B cell (primary cell): ENCODE measurements at regions of chr5 and their contacts with region 1.

Region 1: DNA sequence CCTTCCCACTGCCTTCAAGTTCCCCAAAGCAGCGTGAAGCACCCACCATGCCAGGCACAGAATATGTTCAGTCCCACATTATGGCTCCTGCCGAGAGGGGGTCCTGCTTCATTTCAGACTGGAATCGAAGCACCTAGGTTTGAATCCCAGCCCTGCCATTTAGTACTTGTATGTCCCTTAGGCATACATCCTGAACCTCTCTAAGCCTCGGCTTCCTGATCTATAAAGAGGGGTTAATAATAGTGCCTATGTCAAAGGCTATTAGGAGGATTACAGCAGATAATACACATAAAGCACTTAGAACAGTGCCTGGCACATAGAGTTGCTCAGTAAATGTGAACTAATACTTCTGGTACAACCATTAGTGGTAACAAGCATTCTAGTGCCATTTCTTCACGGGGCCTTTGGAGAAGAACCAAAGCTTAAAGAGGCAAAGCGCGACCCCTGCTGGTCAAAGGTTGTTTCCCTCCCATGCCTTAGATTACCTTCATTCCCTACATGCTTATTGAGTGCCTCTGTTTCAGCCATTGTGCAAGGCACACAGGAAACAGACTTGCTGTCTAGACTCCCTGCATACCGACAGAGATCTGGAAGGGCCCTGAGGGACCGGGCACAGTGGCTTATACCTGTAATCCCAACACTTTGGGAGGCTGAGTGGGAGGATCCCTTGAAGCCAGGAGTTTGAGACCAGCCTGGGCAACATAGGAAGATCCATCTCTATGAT is 98.2 kb downstream of the PPARGC1B start:
- DNase-seq: peak; percentile 85
- ATAC-seq: peak; percentile 59
- H3K4me3 ChIP-seq: no peak overlapping the region
- H3K4me3 Mint-ChIP-seq: no peak overlapping the region
- H3K27ac ChIP-seq: no peak overlapping the region
- H3K27ac Mint-ChIP-seq: no peak overlapping the region
- H3K4me1 ChIP-seq: no peaks in the 10 kb centered on the region
- H3K4me1 Mint-ChIP-seq: peaks cover 6% of the 10 kb centered on the region
- H3K27me3 ChIP-seq: no peaks in the 10 kb centered on the region
- H3K27me3 Mint-ChIP-seq: no peaks in the 10 kb centered on the region
- CTCF ChIP-seq: peak; percentile 92

Region 2: GRCh38 chr5:149636851-149637246 is 191.5 kb before region 1 on chr5:
- CTCF ChIA-PET with region 1: interaction called, 389 read pairs
- POLR2A ChIA-PET with region 1: interaction called, 3 read pairs
- intact Hi-C with region 1: no loop called
- DNase-seq: peak; percentile 75
- ATAC-seq: peak; percentile 57
- H3K4me3 ChIP-seq: no peak overlapping the region
- H3K4me3 Mint-ChIP-seq: no peak overlapping the region
- H3K27ac ChIP-seq: no peak overlapping the region
- H3K27ac Mint-ChIP-seq: no peak overlapping the region
- H3K4me1 ChIP-seq: no peaks in the 10 kb centered on the region
- H3K4me1 Mint-ChIP-seq: peaks cover 6% of the 10 kb centered on the region
- H3K27me3 ChIP-seq: no peaks in the 10 kb centered on the region
- H3K27me3 Mint-ChIP-seq: no peaks in the 10 kb centered on the region
- CTCF ChIP-seq: peak; percentile 94

Region 3: DNA sequence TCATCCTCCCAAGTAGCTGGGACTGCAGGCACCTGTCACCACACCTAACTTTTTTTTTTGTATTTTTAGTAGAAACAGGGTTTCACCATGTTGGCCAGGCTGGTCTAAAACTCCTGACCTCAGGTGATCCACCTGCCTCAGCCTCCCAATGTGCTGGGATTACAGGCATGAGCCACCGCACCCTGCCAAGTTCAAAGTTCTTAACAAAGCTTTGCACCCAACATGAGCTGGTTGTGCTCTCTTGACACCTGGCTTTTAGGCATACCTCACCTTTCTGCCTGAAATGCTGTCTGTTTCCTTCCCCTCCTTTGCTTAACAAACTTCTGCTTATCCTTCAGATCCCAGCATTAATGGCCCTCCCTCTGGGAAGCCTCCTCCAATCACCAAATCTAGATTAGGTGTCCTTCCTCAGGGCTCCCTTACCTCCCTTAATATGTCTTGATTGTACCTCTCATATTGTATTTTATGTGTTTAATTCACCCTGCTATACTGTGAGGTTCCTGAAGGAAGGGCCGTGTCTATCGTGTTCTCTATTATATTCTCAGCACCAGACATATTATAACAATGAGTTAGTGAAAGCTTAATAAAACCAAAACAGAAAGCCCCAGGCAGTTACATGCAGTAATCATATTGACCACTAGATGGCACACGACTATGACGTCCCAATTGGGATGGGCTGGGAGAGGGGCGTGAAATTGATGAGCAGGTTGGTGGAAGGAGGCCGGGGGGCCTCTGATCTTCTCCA is 161.1 kb before region 1 on chr5:
- CTCF ChIA-PET with region 1: interaction called, 204 read pairs
- POLR2A ChIA-PET with region 1: no interaction called
- intact Hi-C with region 1: loop called (anchors 1 kb)
- DNase-seq: peak; percentile 72
- ATAC-seq: peak; percentile 45
- H3K4me3 ChIP-seq: no peak overlapping the region
- H3K4me3 Mint-ChIP-seq: no peak overlapping the region
- H3K27ac ChIP-seq: no peak overlapping the region
- H3K27ac Mint-ChIP-seq: no peak overlapping the region
- H3K4me1 ChIP-seq: peaks cover 0 to 4% of the 10 kb centered on the region in 2 donors
- H3K4me1 Mint-ChIP-seq: peaks cover 3% of the 10 kb centered on the region
- H3K27me3 ChIP-seq: no peaks in the 10 kb centered on the region
- H3K27me3 Mint-ChIP-seq: no peaks in the 10 kb centered on the region
- CTCF ChIP-seq: peak; percentile 87

Region 4: GRCh38 chr5:149816661-149817060 is 11.7 kb before region 1 on chr5:
- CTCF ChIA-PET with region 1: interaction called, 12 read pairs
- POLR2A ChIA-PET with region 1: no interaction called
- intact Hi-C with region 1: no loop called
- DNase-seq: no peak
- ATAC-seq: no peak
- H3K4me3 ChIP-seq: no peak overlapping the region
- H3K4me3 Mint-ChIP-seq: no peak overlapping the region
- H3K27ac ChIP-seq: no peak overlapping the region
- H3K27ac Mint-ChIP-seq: no peak overlapping the region
- H3K4me1 ChIP-seq: no peaks in the 10 kb centered on the region
- H3K4me1 Mint-ChIP-seq: peaks cover 3% of the 10 kb centered on the region
- H3K27me3 ChIP-seq: no peaks in the 10 kb centered on the region
- H3K27me3 Mint-ChIP-seq: no peaks in the 10 kb centered on the region
- CTCF ChIP-seq: no peak

Region 5: DNA sequence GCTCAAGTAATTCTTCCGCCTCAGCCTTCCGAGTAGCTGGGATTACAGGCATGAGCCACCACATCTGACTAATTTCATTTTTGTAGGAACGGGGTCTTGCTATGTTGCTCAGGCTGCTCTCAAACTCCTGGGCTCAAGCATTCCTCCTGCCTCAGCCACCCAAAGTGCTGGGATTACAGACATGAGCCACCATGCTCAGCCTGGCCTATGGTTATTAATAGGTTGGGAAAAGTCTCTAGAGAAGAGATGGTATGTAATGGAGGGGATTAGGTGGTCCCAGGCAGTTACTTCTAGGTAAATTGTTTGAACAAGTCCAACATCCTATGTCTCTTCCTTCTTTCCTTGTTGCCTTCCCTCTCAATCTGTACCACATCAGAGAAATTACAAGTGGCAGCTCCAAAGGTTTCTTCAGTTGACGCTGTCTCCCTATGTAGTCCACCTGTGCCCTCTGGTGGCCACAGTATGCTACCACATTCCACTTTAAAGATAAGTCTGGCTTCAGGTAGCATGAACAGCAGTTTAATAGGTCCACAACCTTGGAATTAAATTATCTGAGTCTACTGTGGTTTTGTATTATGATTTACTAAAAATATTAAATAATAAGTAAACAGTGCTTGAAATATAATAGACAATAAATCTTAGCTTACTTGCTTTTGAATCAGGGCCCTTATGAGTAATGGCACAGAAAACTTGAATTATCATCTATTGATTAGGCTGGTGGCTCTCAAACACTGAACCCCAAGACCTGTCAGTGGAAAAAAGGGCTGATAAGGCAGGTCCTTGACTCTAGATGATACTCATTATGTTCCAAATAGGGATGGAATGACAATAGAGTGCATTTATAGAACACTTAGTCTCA is 162.4 kb after region 1 on chr5:
- CTCF ChIA-PET with region 1: interaction called, 194 read pairs
- POLR2A ChIA-PET with region 1: interaction called, 4 read pairs
- intact Hi-C with region 1: no loop called
- DNase-seq: peak; percentile 77
- ATAC-seq: peak; percentile 97
- H3K4me3 ChIP-seq: no peak overlapping the region
- H3K4me3 Mint-ChIP-seq: no peak overlapping the region
- H3K27ac ChIP-seq: no peak overlapping the region
- H3K27ac Mint-ChIP-seq: no peak overlapping the region
- H3K4me1 ChIP-seq: no peaks in the 10 kb centered on the region
- H3K4me1 Mint-ChIP-seq: no peaks in the 10 kb centered on the region
- H3K27me3 ChIP-seq: no peaks in the 10 kb centered on the region
- H3K27me3 Mint-ChIP-seq: no peaks in the 10 kb centered on the region
- CTCF ChIP-seq: peak; percentile 97